HCT116 (cell line): ENCODE measurements at regions of chr4 and their contacts with region 1.

Region 1: GRCh38 chr4:38675146-38676121 is 11.4 kb downstream of the KLF3 start:
- DNase-seq: peak; percentile 60
- ATAC-seq: peak; percentile 58
- H3K4me3 ChIP-seq: 0 out of 4 replicates have a peak overlapping the region, but pooled peaks of 1 of the 2 experiments have one; percentile 32
- H3K27ac ChIP-seq: peak overlapping the region; percentile 88
- H3K4me1 ChIP-seq: peaks cover 54 to 56% of the 10 kb centered on the region in 2 experiments
- H3K27me3 ChIP-seq: no peaks in the 10 kb centered on the region
- CTCF ChIP-seq: peak in 2 of 3 experiments; percentile 82 to 94; a peak in 4 of 6 replicates
- POLR2A ChIP-seq: no peak
- RAD21 ChIP-seq: no peak

Region 2: DNA sequence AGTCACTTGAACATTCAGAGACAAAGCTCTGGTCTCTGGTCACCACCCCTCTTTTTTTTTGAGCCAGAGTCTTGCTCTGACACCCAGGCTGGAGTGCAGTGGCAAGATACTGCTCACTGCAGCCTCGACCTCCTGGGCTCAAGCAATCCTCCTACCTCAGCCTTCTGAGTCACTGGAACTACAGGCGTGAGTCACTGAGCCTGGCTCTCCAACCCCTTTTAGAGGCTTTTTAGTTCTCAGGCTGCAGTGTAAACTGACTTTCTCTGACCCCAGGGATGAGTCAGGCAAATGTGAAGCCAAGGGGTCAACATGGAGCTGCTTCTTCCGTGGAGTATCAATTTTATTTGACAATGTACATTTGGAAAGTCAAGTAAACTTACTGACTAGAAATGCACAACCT is 486.0 kb before region 1 on chr4:
- CTCF ChIA-PET with region 1: interaction called, 17 read pairs
- POLR2A ChIA-PET with region 1: no interaction called
- RAD21 ChIA-PET with region 1: no interaction called
- intact Hi-C with region 1: loop called (anchors 2 kb)
- DNase-seq: peak; percentile 90
- ATAC-seq: peak; percentile 79
- H3K4me3 ChIP-seq: peak overlapping the region; percentile 10 to 46
- H3K27ac ChIP-seq: peak overlapping the region; percentile 63
- H3K4me1 ChIP-seq: peaks cover 33 to 36% of the 10 kb centered on the region in 2 experiments
- H3K27me3 ChIP-seq: no peaks in the 10 kb centered on the region
- CTCF ChIP-seq: no peak
- POLR2A ChIP-seq: no peak
- RAD21 ChIP-seq: peak; percentile 18; the same call in 1 of the 2 replicates

Region 3: GRCh38 chr4:38319456-38320342 is 355.7 kb before region 1 on chr4:
- CTCF ChIA-PET with region 1: interaction called, 42 read pairs
- POLR2A ChIA-PET with region 1: interaction called, 14 read pairs
- RAD21 ChIA-PET with region 1: interaction called, 4 to 8 read pairs
- intact Hi-C with region 1: loop called (anchors 1 kb)
- DNase-seq: no peak
- ATAC-seq: peak; percentile 70
- H3K4me3 ChIP-seq: peak overlapping the region in 1 of 2 experiments; percentile 29; a peak in 2 of 4 replicates
- H3K27ac ChIP-seq: peak overlapping the region; percentile 63
- H3K4me1 ChIP-seq: peaks cover 19 to 43% of the 10 kb centered on the region in 2 experiments
- H3K27me3 ChIP-seq: no peaks in the 10 kb centered on the region
- CTCF ChIP-seq: peak; percentile 72 to 99 (median 98)
- POLR2A ChIP-seq: no peak
- RAD21 ChIP-seq: peak; percentile 92

Region 4: DNA sequence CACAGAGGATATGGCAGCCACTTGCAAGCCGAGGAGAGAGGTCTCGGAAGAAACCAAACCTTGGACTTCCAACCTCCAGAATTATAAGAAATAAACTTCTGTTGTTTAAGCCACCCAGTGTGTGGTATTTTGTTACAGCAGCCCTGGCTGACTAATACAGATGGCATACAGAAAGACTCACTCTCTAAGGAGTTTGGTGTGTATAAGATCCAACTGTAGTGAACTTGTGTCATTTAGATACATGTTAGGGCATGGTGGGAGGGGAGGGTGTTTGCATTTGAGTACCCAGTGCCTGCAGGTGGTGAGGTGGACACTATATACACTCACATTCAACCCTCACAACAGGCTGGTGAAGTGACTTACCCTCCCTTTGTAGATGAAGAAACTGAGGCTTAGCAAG is 244.6 kb before region 1 on chr4:
- CTCF ChIA-PET with region 1: no interaction called
- POLR2A ChIA-PET with region 1: no interaction called
- RAD21 ChIA-PET with region 1: no interaction called
- intact Hi-C with region 1: no loop called
- DNase-seq: no peak
- ATAC-seq: no peak
- H3K4me3 ChIP-seq: no peak overlapping the region
- H3K27ac ChIP-seq: no peak overlapping the region
- H3K4me1 ChIP-seq: no peaks in the 10 kb centered on the region
- H3K27me3 ChIP-seq: no peaks in the 10 kb centered on the region
- CTCF ChIP-seq: no peak
- POLR2A ChIP-seq: no peak
- RAD21 ChIP-seq: no peak

Region 5: DNA sequence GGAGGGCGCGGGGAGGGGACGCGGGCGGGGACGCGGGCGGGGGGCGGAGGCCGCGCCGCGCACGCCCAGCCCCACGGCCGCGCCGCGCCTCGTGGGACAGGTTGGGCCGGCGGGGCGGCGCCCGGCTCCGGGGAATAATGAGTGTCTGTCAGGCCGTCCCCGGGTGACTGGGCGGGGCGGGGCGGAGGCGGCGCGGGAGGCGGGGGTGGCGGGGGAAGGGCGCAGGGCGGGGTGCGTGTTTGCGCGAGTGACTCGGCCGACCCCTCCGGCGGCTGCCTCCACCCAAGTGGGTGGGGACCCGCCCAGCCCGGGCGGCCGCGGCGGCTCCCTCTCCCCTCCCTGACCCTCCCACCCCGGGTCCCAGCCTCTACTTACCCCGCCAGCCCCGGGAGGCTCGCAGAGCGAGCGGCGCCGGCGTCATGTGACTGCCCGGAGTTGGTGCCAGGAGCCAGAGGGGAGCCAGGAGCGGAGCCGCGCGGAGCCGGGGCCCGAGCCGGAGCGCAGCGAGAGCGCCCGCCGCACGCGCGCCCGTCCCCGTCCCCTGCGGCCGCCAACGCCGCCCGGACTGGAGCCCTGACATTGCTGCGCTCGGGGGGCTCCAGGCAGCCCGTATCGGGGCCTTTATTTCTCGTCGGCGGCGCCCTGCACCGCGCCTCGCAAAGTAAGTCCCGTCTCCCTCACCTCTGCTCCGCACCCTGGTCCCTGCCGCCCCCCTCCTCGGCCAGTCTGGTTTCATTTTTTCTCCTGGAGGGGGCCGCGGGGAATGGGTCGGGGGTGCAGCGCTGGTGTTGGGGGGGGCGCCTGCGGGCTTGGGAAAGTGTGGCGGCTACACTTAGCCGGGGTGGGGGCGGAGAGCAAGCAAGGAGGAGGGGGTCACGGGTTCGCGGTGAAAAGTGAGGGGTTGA is 11.4 kb before region 1 on chr4 and contains the start of gene KLF3:
- CTCF ChIA-PET with region 1: interaction called, 10 read pairs
- POLR2A ChIA-PET with region 1: interaction called, 3 read pairs
- RAD21 ChIA-PET with region 1: interaction called in 1 of 2 experiments, 3 read pairs
- intact Hi-C with region 1: no loop called
- DNase-seq: peak; percentile 52
- ATAC-seq: peak; percentile 80
- H3K4me3 ChIP-seq: peak within 1 kb of the TSS; percentile 68 to 80
- H3K27ac ChIP-seq: peak within 1 kb of the TSS; percentile 90
- H3K4me1 ChIP-seq: peaks cover 29 to 45% of the 10 kb centered on the region in 2 experiments
- H3K27me3 ChIP-seq: no peaks in the 10 kb centered on the region
- CTCF ChIP-seq: no peak
- POLR2A ChIP-seq: no peak
- RAD21 ChIP-seq: no peak
- total RNA-seq, gene KLF3: 44.2 TPM

Region 6: GRCh38 chr4:38730830-38731646 is 55.6 kb after region 1 on chr4:
- CTCF ChIA-PET with region 1: interaction called, 3 read pairs
- POLR2A ChIA-PET with region 1: interaction called, 3 read pairs
- RAD21 ChIA-PET with region 1: interaction called in 1 of 2 experiments, 3 read pairs
- intact Hi-C with region 1: loop called (anchors 2 kb)
- DNase-seq: peak; percentile 50
- ATAC-seq: peak; percentile 64
- H3K4me3 ChIP-seq: 0 out of 4 replicates have a peak overlapping the region, but pooled peaks of 1 of the 2 experiments have one; percentile 5
- H3K27ac ChIP-seq: no peak overlapping the region
- H3K4me1 ChIP-seq: peaks cover 22 to 30% of the 10 kb centered on the region in 2 experiments
- H3K27me3 ChIP-seq: no peaks in the 10 kb centered on the region
- CTCF ChIP-seq: peak; percentile 82 to 99 (median 96)
- POLR2A ChIP-seq: no peak
- RAD21 ChIP-seq: peak; percentile 96